Cardiac septum (tissue), 1 donor: ENCODE measurements at regions of chr14 and their contacts with region 1.

Region 1: GRCh38 chr14:93137864-93138263 is 22.1 kb upstream of the ITPK1 start:
- DNase-seq: no peak

Region 2: GRCh38 chr14:92880869-92881289 is 257.0 kb before region 1 on chr14:
- intact Hi-C with region 1: loop called (anchors 5 kb)
- DNase-seq: no peak

Region 3: GRCh38 chr14:92951912-92952471 is 185.9 kb before region 1 on chr14:
- intact Hi-C with region 1: loop called (anchors 2 kb)
- DNase-seq: peak; percentile 85

Region 4: GRCh38 chr14:92973261-92973797 is 164.5 kb before region 1 on chr14:
- intact Hi-C with region 1: loop called (anchors 5 kb)
- DNase-seq: peak; percentile 85

Region 5: DNA sequence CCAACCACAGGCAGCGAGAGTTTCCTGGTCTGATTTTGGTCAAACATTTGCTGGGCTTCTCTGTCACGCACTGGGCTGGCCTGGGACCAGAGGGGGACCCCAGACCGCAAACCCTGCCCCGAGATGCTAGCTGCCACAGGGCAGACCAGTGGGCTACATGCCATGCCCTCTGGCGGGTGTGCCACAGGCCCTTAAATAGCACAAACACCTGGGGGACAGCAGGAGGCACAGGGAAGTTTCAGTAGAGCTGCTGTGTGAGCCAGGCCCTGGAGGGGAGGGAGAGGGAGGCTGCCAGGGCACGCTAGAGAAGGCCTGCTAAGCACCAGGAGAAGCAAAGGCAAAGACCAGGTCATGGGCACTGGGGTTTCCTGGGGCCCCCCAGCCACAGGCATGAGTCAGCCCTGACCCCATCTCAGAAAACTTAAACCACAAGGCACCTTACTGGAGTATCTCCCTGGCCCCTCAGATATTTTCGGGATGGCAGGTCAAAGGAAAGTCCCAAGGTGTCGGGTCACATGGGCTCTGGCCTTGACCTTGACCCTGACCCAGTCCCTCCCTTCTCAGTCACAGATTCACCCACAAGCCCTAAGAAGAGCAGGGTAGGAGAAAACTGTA is 51.3 kb before region 1 on chr14:
- intact Hi-C with region 1: no loop called
- DNase-seq: no peak

Region 6: GRCh38 chr14:93115069-93115820 is 22.6 kb before region 1 on chr14:
- intact Hi-C with region 1: loop called (anchors 2 kb)
- DNase-seq: peak; percentile 96